Posterior vena cava (tissue), 2 donors: ENCODE measurements at regions of chr9 and their contacts with region 1.

Region 1: DNA sequence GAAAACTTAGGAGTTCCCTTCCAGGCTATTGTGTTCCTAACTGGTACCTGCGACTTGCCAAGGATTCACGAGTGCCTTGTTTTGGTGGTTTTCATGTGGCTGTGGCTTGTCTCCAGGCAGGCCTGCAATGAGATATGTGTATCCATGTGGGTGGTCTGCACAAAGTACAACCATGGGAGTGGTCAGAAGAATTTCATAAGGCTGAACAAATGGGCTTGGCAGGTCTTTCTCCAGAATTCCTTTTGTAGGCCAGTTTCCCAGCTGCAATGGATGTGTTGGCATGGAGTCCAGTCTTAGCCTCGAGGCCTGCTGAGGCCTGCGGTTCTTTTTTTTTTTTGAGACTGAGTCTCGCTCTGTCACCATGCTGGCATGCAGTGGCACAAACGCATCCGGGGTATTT is 28.8 kb upstream of the MELK start:
- DNase-seq: peak; percentile 56

Region 2: DNA sequence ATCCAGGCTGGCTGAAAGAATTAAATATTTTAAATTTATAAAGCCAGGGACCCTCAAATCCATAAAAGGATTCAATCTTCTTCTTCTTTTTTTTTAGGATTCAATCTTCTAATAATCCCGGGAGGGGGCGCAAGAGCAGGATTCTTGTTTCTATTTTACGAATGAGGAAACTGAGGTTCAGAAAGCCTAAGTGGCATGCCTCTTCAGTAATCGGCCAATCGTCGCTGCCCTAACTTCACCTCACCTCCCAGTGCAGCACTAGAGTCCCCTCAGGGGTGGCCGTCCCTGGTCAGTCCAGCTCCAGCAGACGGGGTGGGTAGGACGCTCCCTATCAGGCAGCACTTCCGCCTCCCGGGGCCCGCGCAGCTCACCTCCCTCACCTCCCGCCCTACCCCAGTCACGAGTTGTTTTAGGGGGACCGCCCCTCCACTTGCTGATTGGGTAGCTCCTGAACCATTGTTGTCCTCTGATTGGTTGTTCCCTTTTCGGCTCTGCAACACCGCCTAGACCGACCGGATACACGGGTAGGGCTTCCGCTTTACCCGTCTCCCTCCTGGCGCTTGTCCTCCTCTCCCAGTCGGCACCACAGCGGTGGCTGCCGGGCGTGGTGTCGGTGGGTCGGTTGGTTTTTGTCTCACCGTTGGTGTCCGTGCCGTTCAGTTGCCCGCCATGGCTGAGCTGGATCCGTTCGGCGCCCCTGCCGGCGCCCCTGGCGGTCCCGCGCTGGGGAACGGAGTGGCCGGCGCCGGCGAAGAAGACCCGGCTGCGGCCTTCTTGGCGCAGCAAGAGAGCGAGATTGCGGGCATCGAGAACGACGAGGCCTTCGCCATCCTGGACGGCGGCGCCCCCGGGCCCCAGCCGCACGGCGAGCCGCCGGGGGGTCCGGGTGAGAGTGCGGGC is 353.3 kb before region 1 on chr9 and contains the start of gene CLTA:
- intact Hi-C with region 1: no loop called
- DNase-seq: peak; percentile 98
- total RNA-seq, gene CLTA: 109 to 135 TPM

Region 3: DNA sequence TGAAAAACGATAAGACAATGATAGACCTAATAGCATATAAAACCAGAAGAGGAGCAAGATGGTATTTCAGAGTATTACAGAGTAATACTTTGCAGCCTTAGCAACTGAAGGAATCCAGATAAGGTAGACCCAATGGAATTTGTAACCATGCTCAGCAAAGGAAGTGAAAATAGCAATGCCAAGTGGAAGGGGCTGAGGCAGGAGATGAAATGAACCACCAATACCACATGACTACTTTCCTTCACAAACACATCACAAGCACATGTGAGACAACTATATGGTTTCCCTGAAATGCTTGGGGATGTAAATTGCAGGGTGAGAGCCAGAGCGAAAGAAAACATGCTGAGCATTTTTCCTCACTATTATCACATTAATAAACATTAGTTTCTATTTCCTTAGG is 51.1 kb before region 1 on chr9:
- intact Hi-C with region 1: loop called in 1 of 2 experiments (anchors 2 kb)
- DNase-seq: no peak

Region 4: DNA sequence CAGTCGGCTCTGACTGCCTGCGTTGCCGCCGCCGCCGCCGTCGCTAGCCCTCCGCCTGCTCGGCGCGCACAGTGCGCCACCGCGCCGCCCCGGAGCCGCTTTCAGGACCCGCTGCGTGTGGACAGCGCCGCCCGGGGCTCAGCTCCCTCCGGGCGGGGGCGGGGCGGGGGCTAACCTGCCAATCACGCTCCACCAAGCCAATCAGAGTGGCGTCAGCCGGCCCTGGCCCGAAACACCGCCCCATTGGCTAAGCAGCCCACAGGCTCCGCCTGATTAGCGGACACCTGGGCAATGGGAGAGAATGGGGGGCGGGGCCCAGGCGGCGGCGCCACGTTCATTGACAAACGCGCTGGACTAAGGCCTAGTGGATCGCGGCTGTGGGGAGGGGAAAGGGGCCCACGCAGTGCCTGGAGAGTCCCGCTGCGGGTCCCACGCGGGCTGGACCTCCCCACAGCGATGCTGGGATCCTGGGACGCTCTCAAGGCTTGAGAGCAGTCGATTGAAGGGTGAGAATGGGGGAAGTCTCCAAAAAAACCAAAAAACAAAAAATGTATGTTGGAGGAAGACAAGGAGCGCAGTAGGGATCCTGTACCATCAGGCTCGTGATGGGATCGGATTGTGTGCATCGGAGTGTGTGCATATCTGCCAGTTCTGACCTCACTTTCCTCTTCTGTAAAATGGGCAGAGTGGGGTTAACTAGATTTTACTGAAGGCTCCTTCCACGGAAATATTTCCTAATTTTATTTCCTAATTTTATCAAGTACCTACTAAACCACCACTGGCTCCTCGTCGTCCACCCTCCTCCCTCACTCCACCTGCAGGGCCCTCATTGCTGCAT is 483.9 kb after region 1 on chr9:
- intact Hi-C with region 1: no loop called
- DNase-seq: peak; percentile 91